ENCODE measurements at regions of chr5 and their contacts with region 1.

Region 1: DNA sequence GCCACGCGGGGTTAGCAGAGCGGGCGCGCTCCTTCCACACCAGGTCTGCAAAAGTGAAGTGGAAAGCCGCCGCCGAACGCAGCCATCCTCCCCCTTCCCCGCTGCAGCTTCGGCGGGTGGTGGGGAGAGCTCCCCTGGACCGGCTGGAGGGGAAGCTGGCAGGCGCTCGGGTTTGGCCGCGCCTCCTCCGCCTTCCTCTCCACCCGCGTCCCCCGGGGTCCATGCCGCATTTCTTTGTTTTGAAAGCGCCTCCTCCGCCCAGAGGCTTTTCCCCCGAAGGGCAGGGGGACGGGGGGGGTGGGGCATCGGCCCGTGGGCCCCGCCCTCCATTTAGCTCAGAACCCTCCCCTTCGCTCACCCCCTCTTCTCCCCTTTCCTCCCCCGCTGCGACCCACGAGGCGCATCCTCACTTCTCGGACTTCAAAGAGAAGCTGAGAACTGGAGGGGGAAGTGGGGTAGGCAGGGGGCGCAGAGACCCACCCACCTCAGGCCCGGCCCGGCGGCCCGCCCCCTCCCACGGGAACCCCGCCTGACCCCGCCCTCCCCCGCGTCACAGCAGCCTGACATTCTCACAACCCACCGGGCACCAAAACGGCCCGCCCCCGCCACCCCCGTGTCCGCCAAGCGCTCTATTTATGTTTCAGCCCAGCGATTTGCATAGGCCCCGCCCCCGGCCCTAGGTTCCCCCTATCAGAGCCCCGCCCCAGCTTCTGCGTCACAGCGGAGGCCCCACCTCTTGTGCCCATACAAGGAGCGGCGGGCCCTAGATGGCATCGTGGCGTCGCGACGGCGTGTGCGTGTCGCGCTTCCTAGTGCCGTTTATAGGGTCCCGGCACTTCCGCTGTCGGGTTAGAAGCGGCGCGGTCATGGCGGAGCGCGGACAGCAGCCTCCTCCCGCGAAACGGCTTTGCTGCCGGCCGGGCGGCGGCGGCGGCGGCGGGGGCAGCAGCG is at the start of gene ZSWIM6:
- DNase-seq: peak; percentile 97
- ATAC-seq: peak; percentile 78
- H3K4me3 Mint-ChIP-seq: peak within 1 kb of the TSS; percentile 93
- H3K27ac Mint-ChIP-seq: peak within 1 kb of the TSS; percentile 93
- H3K4me1 Mint-ChIP-seq: peaks cover 48% of the 10 kb centered on the region
- H3K27me3 Mint-ChIP-seq: peaks cover 5% of the 10 kb centered on the region
- CTCF ChIP-seq: no peak
- total RNA-seq, gene ZSWIM6: 6.9 and 8.5 TPM in 2 replicates

Region 2: GRCh38 chr5:59562756-59563389 is 1768.8 kb before region 1 on chr5:
- CTCF ChIA-PET with region 1: no interaction called
- POLR2A ChIA-PET with region 1: no interaction called
- intact Hi-C with region 1: loop called (anchors 10 kb)
- DNase-seq: peak; percentile 60
- ATAC-seq: peak; percentile 91
- H3K4me3 Mint-ChIP-seq: peak overlapping the region; percentile 65
- H3K27ac Mint-ChIP-seq: peak overlapping the region; percentile 91
- H3K4me1 Mint-ChIP-seq: peaks cover 81% of the 10 kb centered on the region
- H3K27me3 Mint-ChIP-seq: no peaks in the 10 kb centered on the region
- CTCF ChIP-seq: no peak

Region 3: GRCh38 chr5:61055434-61056006 is 276.2 kb before region 1 on chr5:
- CTCF ChIA-PET with region 1: interaction called, 3 read pairs
- POLR2A ChIA-PET with region 1: no interaction called
- intact Hi-C with region 1: loop called (anchors 2 kb)
- DNase-seq: no peak
- ATAC-seq: peak; percentile 45
- H3K4me3 Mint-ChIP-seq: no peak overlapping the region
- H3K27ac Mint-ChIP-seq: no peak overlapping the region
- H3K4me1 Mint-ChIP-seq: no peaks in the 10 kb centered on the region
- H3K27me3 Mint-ChIP-seq: no peaks in the 10 kb centered on the region
- CTCF ChIP-seq: no peak

Region 4: GRCh38 chr5:61290791-61291210 is 40.9 kb before region 1 on chr5:
- CTCF ChIA-PET with region 1: no interaction called
- POLR2A ChIA-PET with region 1: no interaction called
- intact Hi-C with region 1: loop called (anchors 2 kb)
- DNase-seq: no peak
- ATAC-seq: no peak
- H3K4me3 Mint-ChIP-seq: no peak overlapping the region
- H3K27ac Mint-ChIP-seq: no peak overlapping the region
- H3K4me1 Mint-ChIP-seq: peaks cover 5% of the 10 kb centered on the region
- H3K27me3 Mint-ChIP-seq: peaks cover 5% of the 10 kb centered on the region
- CTCF ChIP-seq: no peak

Region 5: GRCh38 chr5:61408476-61409168 is 76.9 kb after region 1 on chr5:
- CTCF ChIA-PET with region 1: interaction called, 5 read pairs
- POLR2A ChIA-PET with region 1: interaction called, 43 read pairs
- intact Hi-C with region 1: loop called (anchors 1 kb)
- DNase-seq: peak; percentile 94
- ATAC-seq: peak; percentile 99
- H3K4me3 Mint-ChIP-seq: peak overlapping the region; percentile 70
- H3K27ac Mint-ChIP-seq: peak overlapping the region; percentile 85
- H3K4me1 Mint-ChIP-seq: peaks cover 29% of the 10 kb centered on the region
- H3K27me3 Mint-ChIP-seq: no peaks in the 10 kb centered on the region
- CTCF ChIP-seq: no peak

Region 6: DNA sequence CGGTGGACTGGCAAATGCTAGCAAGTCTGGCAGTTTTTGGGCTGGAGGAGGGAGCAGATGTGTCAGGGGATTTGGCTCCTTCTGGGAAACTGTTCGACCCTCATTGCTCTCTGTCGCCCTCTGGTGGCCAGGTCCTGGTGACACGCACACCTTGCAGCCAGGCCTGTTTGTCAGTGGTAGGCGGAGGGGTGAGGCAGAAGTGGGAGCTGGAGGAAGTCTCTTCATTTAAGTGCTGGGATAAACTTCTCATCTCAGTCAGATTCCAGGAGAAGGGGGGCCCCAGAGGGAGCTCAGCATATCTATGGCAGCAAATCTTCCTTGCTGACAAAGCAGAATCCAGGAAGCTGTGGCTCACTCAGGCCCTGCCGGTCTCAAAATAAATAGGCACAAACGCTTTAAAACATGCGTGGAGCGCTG is 326.9 kb after region 1 on chr5:
- CTCF ChIA-PET with region 1: no interaction called
- POLR2A ChIA-PET with region 1: no interaction called
- intact Hi-C with region 1: loop called (anchors 2 kb)
- DNase-seq: peak; percentile 70
- ATAC-seq: peak; percentile 64
- H3K4me3 Mint-ChIP-seq: no peak overlapping the region
- H3K27ac Mint-ChIP-seq: no peak overlapping the region
- H3K4me1 Mint-ChIP-seq: no peaks in the 10 kb centered on the region
- H3K27me3 Mint-ChIP-seq: peaks cover 8% of the 10 kb centered on the region
- CTCF ChIP-seq: peak; percentile 88

Region 7: DNA sequence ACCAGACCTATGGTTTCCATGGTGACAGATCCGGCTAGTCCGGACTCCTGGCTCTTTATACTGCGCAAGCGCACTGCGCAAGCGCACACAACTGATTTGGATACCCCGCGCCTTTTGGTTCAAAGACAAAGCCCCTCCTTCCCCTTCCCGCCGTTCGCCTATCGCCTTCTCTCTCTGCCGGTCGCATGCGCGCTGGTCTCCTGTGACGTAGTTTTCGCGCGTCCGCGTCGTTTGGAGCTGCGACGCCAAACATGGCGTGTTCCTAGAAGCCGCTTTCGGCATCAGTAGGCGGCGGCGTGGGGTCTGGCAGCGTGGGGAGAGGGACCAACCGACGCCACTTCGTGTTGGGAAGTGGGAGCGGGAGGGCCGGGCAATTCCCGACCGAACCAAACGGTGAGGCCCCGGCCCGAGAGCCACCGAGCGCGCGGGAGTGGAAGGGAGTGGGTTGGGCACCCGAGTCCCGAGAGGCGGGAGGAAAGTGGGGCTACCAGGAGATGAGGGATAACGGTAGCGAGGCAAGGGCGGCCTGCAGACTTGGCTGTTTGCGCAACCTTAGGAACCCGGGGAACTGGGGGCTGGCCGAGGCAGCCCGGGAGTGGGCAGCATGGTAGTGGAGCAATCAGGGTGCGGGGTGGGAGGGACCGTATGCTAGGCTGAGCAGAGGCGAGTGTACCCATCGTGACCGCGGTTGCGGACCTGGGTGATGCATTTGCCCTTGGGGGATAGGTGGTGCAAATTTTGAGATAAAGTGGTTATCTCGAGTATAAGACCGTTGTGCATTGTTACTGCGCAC is 1081.1 kb after region 1 on chr5 and contains the start of gene IPO11:
- CTCF ChIA-PET with region 1: no interaction called
- POLR2A ChIA-PET with region 1: interaction called, 4 read pairs
- intact Hi-C with region 1: loop called (anchors 2 kb)
- DNase-seq: peak; percentile 99
- ATAC-seq: peak; percentile 94
- H3K4me3 Mint-ChIP-seq: peak within 1 kb of the TSS; percentile 92
- H3K27ac Mint-ChIP-seq: peak within 1 kb of the TSS; percentile 87
- H3K4me1 Mint-ChIP-seq: peaks cover 20% of the 10 kb centered on the region
- H3K27me3 Mint-ChIP-seq: no peaks in the 10 kb centered on the region
- CTCF ChIP-seq: no peak
- total RNA-seq, gene IPO11: 32.9 and 34.7 TPM in 2 replicates